ENCODE measurements at regions of chr1 and their contacts with region 1.

Region 1: DNA sequence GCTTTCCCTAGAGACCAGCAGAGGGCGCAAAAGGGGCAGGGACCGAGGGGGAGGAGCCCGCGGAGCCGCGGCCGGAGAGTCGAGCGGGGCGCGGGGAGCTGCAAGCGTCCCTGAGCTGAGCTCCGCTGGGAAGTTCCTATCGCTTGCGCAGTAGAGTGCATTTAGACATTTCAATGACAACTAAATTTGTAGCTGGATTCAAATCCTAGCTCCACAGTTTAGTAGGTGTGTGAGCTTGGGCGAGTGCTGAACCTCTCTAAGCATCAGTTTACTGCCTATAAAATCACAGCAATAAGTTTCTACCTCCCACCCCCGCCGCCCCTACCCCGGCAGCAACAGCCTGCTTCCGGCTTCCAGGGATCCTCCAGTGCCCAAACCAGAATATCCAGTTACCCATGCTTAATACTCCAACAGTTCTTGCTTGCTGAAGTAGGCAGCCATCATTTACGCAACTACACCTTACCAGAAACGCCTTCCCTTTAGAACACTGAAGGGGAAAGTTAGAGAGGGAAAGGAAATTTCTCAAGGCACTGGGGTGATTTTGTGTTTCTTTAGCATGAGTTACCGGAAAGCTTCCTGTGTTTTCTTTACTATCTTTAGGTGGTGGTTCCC is 9.1 kb downstream of the TLR5 start:
- DNase-seq: peak; percentile 63 to 74
- ATAC-seq: peak; percentile 70 to 75
- H3K4me3 ChIP-seq: peak overlapping the region; percentile 42 to 58 (median 47)
- H3K27ac ChIP-seq: peak overlapping the region; percentile 60 to 75 (median 64)
- H3K4me1 ChIP-seq: peaks cover 42 to 44% of the 10 kb centered on the region in 2 donors
- H3K27me3 ChIP-seq: no peaks in the 10 kb centered on the region
- CTCF ChIP-seq: peak in 4 of 5 experiments; percentile 87 to 97 (median 92)
- POLR2A ChIP-seq: no peak

Region 2: DNA sequence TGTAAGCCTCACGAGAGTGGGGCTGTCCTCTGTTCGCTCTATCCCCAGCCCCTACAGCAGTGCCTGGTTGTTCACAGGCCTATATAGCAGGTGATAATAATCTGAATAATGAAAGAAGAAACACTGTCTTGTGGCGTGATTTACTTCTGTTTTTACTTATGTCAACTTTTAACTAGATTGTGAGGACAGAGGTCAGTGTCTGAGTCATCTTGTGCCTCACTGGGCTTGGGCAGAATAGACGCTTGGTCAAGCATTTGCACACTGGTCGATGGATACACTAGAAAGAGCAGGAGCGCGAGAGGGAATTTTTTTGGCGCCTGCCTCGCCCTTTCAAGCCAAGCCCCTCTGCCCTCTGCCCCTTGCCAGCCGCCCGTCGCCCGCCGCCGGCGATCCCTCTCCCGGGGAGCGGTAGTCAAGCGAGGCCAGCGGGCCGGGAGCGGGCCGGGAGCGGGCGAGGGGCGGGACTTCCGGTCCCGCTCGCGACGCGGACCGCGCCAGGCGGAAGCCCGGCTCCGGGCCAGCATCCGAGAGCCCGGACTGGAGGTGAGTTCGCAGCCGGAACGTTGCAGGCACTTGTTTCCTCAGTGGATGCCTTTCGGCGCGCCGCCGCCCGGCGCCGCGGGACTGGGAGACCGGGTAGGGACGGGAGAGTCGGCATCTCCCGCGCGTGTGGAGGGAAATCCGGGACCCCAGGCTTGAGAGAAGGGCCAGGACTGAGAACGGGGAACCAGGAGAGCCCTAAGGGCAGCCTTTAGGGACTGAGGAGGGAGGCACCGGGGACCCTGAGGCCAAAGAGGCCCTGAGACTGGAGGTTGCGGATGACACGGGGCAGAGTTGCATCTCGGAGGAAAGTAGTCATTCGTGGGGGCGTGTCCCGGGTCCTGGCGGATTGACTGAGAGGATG is 319.1 kb before region 1 on chr1 and contains the start of gene DISP1:
- in situ Hi-C with region 1: no loop called
- intact Hi-C with region 1: loop called (anchors 5 kb)
- DNase-seq: peak; percentile 67 to 77
- ATAC-seq: peak; percentile 88 to 92
- H3K4me3 ChIP-seq: peak within 1 kb of the TSS; percentile 75 to 82 (median 79)
- H3K27ac ChIP-seq: peak within 1 kb of the TSS; percentile 80 to 87 (median 86)
- H3K4me1 ChIP-seq: peaks cover 13 to 17% of the 10 kb centered on the region in 2 donors
- H3K27me3 ChIP-seq: no peaks in the 10 kb centered on the region
- CTCF ChIP-seq: no peak
- POLR2A ChIP-seq: peak; percentile 17 to 30
- total RNA-seq, gene DISP1: 2.4 to 3.7 (median 2.9) TPM

Region 3: DNA sequence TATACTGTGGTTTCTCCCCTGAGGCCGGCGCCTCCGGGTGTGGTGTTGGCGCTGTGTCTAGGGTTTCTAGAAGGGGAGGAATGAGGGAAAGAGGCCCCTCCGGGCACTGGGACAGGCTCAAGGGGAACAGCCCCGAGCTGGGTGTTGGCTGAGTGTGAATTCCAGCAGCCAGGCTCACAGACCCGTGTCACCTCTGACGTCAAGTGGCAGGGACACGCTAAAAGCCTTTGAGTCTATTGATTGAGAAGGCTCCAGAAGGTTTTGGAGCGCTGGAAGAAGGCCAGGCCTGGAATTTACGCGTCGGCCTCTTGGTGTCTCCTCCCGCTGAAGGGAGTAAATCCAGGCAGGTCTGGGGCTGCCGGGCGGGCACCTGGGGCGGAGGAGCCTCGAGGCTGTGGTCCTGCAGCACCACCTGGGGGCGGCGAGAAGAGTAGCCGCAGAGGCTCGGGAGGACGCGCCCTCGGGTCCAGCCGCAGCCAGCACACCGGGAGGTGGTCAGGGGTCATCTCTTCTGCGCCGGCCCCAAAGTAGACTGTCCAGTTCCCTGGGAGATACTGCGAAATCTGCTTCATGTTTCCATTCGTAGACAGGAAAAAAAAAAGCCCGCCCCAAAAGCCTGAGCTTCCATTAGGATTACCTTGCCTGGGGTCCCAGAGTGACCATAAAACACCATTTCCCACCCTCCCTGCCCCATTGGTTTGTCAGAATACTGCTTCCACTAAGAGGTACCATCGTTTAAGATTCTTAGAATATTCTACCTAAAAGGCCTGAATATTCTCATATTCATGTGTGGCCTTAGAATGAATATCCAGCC is 52.5 kb before region 1 on chr1:
- in situ Hi-C with region 1: no loop called
- intact Hi-C with region 1: loop called (anchors 5 kb)
- DNase-seq: peak; percentile 60 to 72
- ATAC-seq: peak; percentile 85 to 95
- H3K4me3 ChIP-seq: peak overlapping the region; percentile 36 to 77 (median 48)
- H3K27ac ChIP-seq: peak overlapping the region; percentile 29 to 61 (median 46)
- H3K4me1 ChIP-seq: no peaks in the 10 kb centered on the region
- H3K27me3 ChIP-seq: no peaks in the 10 kb centered on the region
- CTCF ChIP-seq: peak; percentile 92 to 98 (median 96)
- POLR2A ChIP-seq: no peak

Region 4: DNA sequence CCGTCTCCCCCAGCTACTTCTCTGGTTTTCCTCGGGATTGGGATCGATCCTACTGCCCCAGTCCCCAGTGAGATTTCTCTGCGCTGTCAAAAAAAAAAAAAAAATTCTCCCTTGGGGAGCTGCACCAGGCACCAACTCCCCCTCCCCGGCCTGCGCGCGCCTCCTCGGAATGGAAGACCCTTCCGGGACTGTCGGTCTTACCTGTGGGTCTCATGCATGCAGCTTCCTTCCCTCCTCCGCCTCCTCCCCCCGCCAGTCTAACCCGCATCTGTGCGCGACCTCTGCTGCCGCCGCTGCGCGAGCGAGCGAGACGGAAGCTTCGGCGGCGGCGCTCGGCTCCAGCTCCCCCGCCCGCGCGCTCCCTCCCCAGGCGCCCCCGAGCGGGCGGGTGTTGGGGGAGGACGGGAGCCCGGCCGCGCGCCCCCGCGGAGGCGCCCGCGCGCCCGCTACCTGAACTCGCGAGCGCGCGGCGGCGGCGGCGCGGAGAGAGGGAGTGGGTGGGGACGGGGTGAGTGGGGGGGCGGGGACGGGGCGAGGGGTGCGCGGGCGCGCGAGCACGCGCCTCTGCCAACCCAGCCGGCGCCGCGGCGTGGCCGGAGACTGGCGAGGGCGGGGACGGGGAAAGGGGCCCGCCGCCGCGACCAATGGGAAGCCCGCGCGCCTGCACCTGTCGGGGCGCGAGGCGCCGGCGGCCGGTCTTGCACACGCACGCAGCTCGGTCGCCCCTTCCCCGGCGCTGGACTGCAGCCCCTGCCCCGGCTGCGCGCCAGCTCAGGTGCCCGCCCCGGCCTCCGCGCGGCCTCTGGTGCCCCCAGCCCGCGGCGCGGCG is 230.1 kb after region 1 on chr1 and contains the start of gene SUSD4:
- in situ Hi-C with region 1: no loop called
- intact Hi-C with region 1: loop called (anchors 2 kb)
- DNase-seq: no peak
- ATAC-seq: peak; percentile 81 to 82
- H3K4me3 ChIP-seq: peak within 1 kb of the TSS; percentile 55 to 60 (median 58)
- H3K27ac ChIP-seq: peak within 1 kb of the TSS in 1 of 4 donors; percentile 14
- H3K4me1 ChIP-seq: peaks cover 6 to 16% of the 10 kb centered on the region in 2 donors
- H3K27me3 ChIP-seq: peaks cover 0 to 4% (median 0%) of the 10 kb centered on the region in 3 donors
- CTCF ChIP-seq: peak in 1 of 5 experiments; percentile 9
- POLR2A ChIP-seq: peak in 1 of 2 donors; percentile 19
- total RNA-seq, gene SUSD4: 1.2 to 4.0 (median 3.3) TPM in 3 of 4 donors, not detected in the other

Region 5: DNA sequence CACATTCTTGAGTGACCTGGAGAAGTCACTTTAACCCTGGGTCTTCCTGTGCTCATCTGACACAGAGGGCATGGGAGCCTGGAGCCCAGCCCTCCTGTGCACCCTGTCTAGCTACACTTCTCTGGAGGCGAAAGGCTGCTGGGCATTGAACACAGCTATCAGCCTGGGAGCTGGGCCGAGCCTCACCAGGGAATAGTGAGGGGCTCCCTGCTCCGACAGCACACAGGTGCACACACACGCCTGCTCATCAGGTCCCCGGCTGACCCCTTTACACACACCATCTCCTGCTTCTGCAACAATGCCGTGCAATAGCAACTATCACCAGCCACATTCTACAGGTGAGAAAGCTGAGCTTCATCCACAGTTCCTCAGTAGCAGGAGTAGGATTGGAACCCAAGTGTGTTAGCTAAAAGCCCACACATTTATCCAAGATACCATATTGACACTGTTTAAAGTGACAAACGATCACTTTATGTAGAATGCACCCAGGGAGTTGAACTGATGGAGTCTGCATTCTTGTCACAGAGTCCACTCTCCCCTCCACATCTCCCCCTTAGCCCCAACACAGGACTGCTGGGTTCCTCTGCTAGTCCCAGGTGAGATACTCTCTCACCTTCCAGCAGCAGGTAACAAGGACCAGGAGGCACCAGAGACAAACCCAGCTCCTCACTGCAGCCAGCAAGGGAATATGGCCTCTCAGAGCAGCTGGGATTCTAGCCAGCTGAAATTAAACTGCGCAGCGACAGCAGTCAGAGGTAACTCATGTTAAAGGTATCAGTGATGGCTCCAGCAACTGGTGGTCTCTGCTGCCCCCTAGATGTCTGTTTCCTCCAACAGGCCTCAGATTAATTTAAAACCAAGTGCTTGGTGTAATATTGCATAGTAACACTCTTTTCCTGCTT is 549.9 kb after region 1 on chr1:
- in situ Hi-C with region 1: loop called in 2 of 4 experiments (anchors 10 kb)
- intact Hi-C with region 1: loop called (anchors 1 kb)
- DNase-seq: peak; percentile 8 to 31
- ATAC-seq: peak in 1 of 2 donors; percentile 76
- H3K4me3 ChIP-seq: no peak overlapping the region
- H3K27ac ChIP-seq: no peak overlapping the region
- H3K4me1 ChIP-seq: no peaks in the 10 kb centered on the region
- H3K27me3 ChIP-seq: no peaks in the 10 kb centered on the region
- CTCF ChIP-seq: peak; percentile 49 to 68 (median 63)
- POLR2A ChIP-seq: no peak

Region 6: GRCh38 chr1:223845810-223846682 is 712.1 kb after region 1 on chr1 and contains the start of gene TP53BP2:
- in situ Hi-C with region 1: no loop called
- intact Hi-C with region 1: loop called (anchors 5 kb)
- DNase-seq: peak; percentile 80 to 88
- ATAC-seq: peak; percentile 87 to 89
- H3K4me3 ChIP-seq: peak within 1 kb of the TSS; percentile 78 to 93 (median 89)
- H3K27ac ChIP-seq: peak within 1 kb of the TSS; percentile 94 to 100 (median 98)
- H3K4me1 ChIP-seq: peaks cover 15 to 38% of the 10 kb centered on the region in 2 donors
- H3K27me3 ChIP-seq: no peaks in the 10 kb centered on the region
- CTCF ChIP-seq: peak; percentile 65 to 82 (median 76)
- POLR2A ChIP-seq: peak; percentile 88 to 89
- total RNA-seq, gene TP53BP2: 22.2 to 85.1 (median 38.8) TPM